SK-N-SH (cell line): ENCODE measurements at regions of chr22 and their contacts with region 1.

Region 1: GRCh38 chr22:28051787-28052356 is 132.8 kb upstream of the PITPNB start:
- DNase-seq: peak; percentile 44
- H3K4me3 ChIP-seq: no peak overlapping the region; a peak in 1 of 4 replicates
- H3K27ac ChIP-seq: peak overlapping the region in 1 of 2 experiments; percentile 28; a peak in 2 of 4 replicates
- H3K4me1 ChIP-seq: peaks cover 10 to 34% of the 10 kb centered on the region in 2 experiments; a peak in 3 of 4 replicates
- H3K27me3 ChIP-seq: no peaks in the 10 kb centered on the region
- CTCF ChIP-seq: peak; percentile 98
- EP300 ChIP-seq: no peak
- RAD21 ChIP-seq: peak; percentile 92

Region 2: GRCh38 chr22:28029201-28029948 is 22.5 kb before region 1 on chr22:
- CTCF ChIA-PET with region 1: interaction called, 28 read pairs
- POLR2A ChIA-PET with region 1: no interaction called
- DNase-seq: peak; percentile 59
- H3K4me3 ChIP-seq: no peak overlapping the region
- H3K27ac ChIP-seq: peak overlapping the region; percentile 40 to 79; a peak in 3 of 4 replicates
- H3K4me1 ChIP-seq: peaks cover 19 to 94% of the 10 kb centered on the region in 2 experiments
- H3K27me3 ChIP-seq: no peaks in the 10 kb centered on the region
- CTCF ChIP-seq: no peak
- EP300 ChIP-seq: peak; percentile 20 to 40; a peak in 2 of 4 replicates
- RAD21 ChIP-seq: no peak

Region 3: DNA sequence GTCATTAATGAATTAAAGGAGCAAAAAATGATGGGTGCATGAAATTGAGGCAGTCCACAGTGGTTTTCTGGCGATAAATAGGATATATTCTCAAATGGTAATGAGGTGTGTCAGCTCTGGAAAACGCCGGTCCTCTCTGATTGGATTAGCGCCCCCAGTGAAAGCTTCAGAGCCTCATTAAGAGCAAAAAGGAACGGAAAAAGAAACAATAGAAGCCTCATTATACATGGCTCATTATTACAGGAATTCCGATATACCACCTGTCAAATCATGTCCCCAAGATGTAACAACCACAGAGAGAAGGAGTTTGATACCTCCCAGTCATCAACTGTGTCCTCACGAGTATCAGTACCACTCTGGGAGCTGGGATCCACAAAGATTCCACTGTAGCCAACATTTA is 42.9 kb after region 1 on chr22:
- CTCF ChIA-PET with region 1: interaction called, 15 read pairs
- POLR2A ChIA-PET with region 1: no interaction called
- DNase-seq: no peak
- H3K4me3 ChIP-seq: no peak overlapping the region
- H3K27ac ChIP-seq: no peak overlapping the region; a peak in 1 of 4 replicates
- H3K4me1 ChIP-seq: peaks cover 0 to 33% of the 10 kb centered on the region in 2 experiments; a peak in 2 of 4 replicates
- H3K27me3 ChIP-seq: no peaks in the 10 kb centered on the region
- CTCF ChIP-seq: no peak
- EP300 ChIP-seq: no peak
- RAD21 ChIP-seq: no peak

Region 4: GRCh38 chr22:28429711-28430110 is 377.8 kb after region 1 on chr22:
- CTCF ChIA-PET with region 1: interaction called, 18 read pairs
- POLR2A ChIA-PET with region 1: no interaction called
- DNase-seq: no peak
- H3K4me3 ChIP-seq: no peak overlapping the region
- H3K27ac ChIP-seq: no peak overlapping the region
- H3K4me1 ChIP-seq: peaks cover 3 to 12% of the 10 kb centered on the region in 2 experiments; a peak in 2 of 4 replicates
- H3K27me3 ChIP-seq: no peaks in the 10 kb centered on the region
- CTCF ChIP-seq: no peak
- EP300 ChIP-seq: no peak
- RAD21 ChIP-seq: no peak

Region 5: GRCh38 chr22:28442264-28442710 is 390.4 kb after region 1 on chr22:
- CTCF ChIA-PET with region 1: interaction called, 44 read pairs
- POLR2A ChIA-PET with region 1: interaction called, 3 read pairs
- DNase-seq: peak; percentile 91
- H3K4me3 ChIP-seq: peak overlapping the region; percentile 67 to 76
- H3K27ac ChIP-seq: peak overlapping the region; percentile 62 to 91; a peak in 3 of 4 replicates
- H3K4me1 ChIP-seq: peaks cover 13 to 27% of the 10 kb centered on the region in 2 experiments; a peak in 3 of 4 replicates
- H3K27me3 ChIP-seq: no peaks in the 10 kb centered on the region
- CTCF ChIP-seq: peak; percentile 80
- EP300 ChIP-seq: peak in 1 of 2 experiments; percentile 37; a peak in 1 of 4 replicates
- RAD21 ChIP-seq: peak; percentile 87

Region 6: GRCh38 chr22:28600546-28601143 is 548.8 kb after region 1 on chr22:
- CTCF ChIA-PET with region 1: interaction called, 82 read pairs
- POLR2A ChIA-PET with region 1: no interaction called
- DNase-seq: peak; percentile 25
- H3K4me3 ChIP-seq: no peak overlapping the region; a peak in 1 of 4 replicates
- H3K27ac ChIP-seq: no peak overlapping the region
- H3K4me1 ChIP-seq: peaks cover 0 to 3% of the 10 kb centered on the region in 2 experiments; a peak in 2 of 4 replicates
- H3K27me3 ChIP-seq: no peaks in the 10 kb centered on the region
- CTCF ChIP-seq: peak; percentile 63
- EP300 ChIP-seq: no peak
- RAD21 ChIP-seq: peak; percentile 87